ENCODE measurements at regions of chr2 and their contacts with region 1.

Region 1: GRCh38 chr2:85584857-85585783 is 889 bp downstream of the VAMP5 start:
- DNase-seq: peak in 4 of 9 experiments; percentile 19 to 60 (median 40)
- ATAC-seq: peak; percentile 45
- H3K4me3 ChIP-seq: peak overlapping the region; percentile 67 to 78
- H3K4me3 Mint-ChIP-seq: peak overlapping the region; percentile 90
- H3K27ac ChIP-seq: peak overlapping the region; percentile 54 to 76
- H3K27ac Mint-ChIP-seq: peak overlapping the region; percentile 94
- H3K4me1 ChIP-seq: peaks cover 33% of the 10 kb centered on the region
- H3K4me1 Mint-ChIP-seq: peaks cover 57% of the 10 kb centered on the region
- H3K27me3 ChIP-seq: no peaks in the 10 kb centered on the region
- H3K27me3 Mint-ChIP-seq: no peaks in the 10 kb centered on the region
- CTCF ChIP-seq: no peak

Region 2: GRCh38 chr2:85602476-85603234 is 17.5 kb after region 1 on chr2 and contains the start of gene TMEM150A:
- CTCF ChIA-PET with region 1: interaction called, 6 read pairs
- POLR2A ChIA-PET with region 1: interaction called, 8 read pairs
- intact Hi-C with region 1: loop called in 1 of 2 experiments (anchors 2 kb)
- DNase-seq: peak; percentile 71 to 93 (median 87)
- ATAC-seq: peak; percentile 91
- H3K4me3 ChIP-seq: peak within 1 kb of the TSS; percentile 92 to 97
- H3K4me3 Mint-ChIP-seq: peak within 1 kb of the TSS; percentile 91
- H3K27ac ChIP-seq: peak within 1 kb of the TSS; percentile 58 to 67
- H3K27ac Mint-ChIP-seq: peak within 1 kb of the TSS; percentile 89
- H3K4me1 ChIP-seq: peaks cover 27% of the 10 kb centered on the region
- H3K4me1 Mint-ChIP-seq: peaks cover 37% of the 10 kb centered on the region
- H3K27me3 ChIP-seq: no peaks in the 10 kb centered on the region
- H3K27me3 Mint-ChIP-seq: no peaks in the 10 kb centered on the region
- CTCF ChIP-seq: no peak
- total RNA-seq, gene TMEM150A: 5.7 to 6.0 TPM

Region 3: DNA sequence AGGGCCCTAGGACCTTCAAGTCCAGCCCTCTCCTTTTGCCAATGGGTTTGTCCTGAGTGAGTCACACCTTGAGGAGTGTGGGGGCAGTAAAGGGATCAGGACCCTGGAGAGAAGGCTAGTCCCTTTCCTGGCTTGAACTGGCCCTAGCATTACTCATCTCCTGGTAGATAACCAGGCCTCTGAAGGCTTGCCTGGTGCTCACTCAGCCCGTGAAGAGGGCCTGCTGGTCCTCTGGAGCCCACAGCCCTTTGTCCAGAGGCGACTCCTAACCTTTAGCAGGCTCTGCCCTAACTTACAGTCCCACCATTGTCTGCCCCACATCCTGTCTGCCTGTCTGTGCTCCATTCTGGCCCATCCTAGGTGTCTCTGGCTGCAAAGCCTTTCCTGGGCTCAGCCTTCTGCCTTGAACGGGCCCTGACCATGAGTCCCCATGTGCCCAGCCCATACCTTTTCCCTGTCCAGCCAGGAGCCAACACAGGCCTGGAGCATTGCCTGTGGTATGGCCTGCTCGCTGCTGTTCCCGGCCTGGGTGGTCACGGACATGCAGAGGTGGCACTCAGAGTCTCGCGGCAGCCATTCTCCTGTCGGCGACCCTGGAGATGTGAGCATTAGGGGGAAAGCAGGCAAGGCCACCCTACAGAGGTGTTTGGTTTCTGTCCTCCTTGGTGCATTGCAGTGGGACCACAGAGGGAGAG is 77.9 kb after region 1 on chr2:
- CTCF ChIA-PET with region 1: no interaction called
- POLR2A ChIA-PET with region 1: no interaction called
- intact Hi-C with region 1: no loop called
- DNase-seq: no peak
- ATAC-seq: no peak
- H3K4me3 ChIP-seq: no peak overlapping the region
- H3K4me3 Mint-ChIP-seq: no peak overlapping the region
- H3K27ac ChIP-seq: no peak overlapping the region
- H3K27ac Mint-ChIP-seq: no peak overlapping the region
- H3K4me1 ChIP-seq: no peaks in the 10 kb centered on the region
- H3K4me1 Mint-ChIP-seq: no peaks in the 10 kb centered on the region
- H3K27me3 ChIP-seq: no peaks in the 10 kb centered on the region
- H3K27me3 Mint-ChIP-seq: no peaks in the 10 kb centered on the region
- CTCF ChIP-seq: no peak